ENCODE measurements at regions of chr13 and their contacts with region 1.

Region 1: DNA sequence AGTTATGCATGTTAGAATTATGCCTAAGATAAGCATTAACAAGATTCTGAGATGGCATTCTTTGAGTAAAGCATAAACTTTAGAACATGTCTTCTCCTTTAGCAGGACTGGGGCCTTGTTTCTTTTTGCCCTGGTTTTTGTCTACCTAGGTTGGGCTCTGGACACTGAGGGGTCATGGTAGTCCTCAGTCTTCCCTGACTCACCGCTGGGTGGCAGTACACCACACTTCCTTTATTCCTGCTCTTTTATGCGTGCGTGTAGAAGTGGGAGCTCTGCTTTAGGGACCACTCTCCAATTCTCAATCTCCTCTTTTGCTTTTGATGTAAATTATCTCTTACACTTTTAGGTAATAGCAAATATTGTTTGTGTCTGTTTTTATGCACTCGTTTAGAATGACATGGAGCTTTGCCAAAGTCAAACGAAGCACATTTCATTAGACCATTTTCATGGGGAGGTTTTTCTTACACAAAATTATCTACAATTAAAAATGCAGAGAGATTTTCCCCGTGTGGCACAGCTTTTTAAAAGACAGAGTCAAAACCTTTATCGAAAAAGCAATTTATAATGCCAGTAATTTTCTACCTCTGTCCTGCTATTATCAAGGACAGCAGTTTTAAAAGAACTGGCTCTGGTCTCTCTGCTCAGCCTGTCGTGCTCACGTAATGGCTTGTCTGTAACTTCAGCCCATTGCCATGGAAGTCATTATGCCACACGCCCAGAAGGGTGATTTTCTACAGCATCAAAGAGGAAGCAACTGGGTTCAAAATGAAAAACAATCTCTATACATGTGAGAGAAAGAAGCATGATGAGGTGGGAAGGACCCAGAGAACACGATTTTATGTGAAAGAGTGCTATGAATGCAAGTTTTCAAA is 413.9 kb downstream of the COG6 start:
- DNase-seq: peak; percentile 78 to 89 (median 83)
- H3K4me3 ChIP-seq: no peak overlapping the region
- H3K27ac ChIP-seq: peak overlapping the region in 1 of 2 donors; percentile 13
- H3K4me1 ChIP-seq: peaks cover 8% of the 10 kb centered on the region
- H3K27me3 ChIP-seq: no peaks in the 10 kb centered on the region
- CTCF ChIP-seq: peak; percentile 42 to 91 (median 76)
- EP300 ChIP-seq: no peak
- POLR2A ChIP-seq: peak; percentile 11

Region 2: DNA sequence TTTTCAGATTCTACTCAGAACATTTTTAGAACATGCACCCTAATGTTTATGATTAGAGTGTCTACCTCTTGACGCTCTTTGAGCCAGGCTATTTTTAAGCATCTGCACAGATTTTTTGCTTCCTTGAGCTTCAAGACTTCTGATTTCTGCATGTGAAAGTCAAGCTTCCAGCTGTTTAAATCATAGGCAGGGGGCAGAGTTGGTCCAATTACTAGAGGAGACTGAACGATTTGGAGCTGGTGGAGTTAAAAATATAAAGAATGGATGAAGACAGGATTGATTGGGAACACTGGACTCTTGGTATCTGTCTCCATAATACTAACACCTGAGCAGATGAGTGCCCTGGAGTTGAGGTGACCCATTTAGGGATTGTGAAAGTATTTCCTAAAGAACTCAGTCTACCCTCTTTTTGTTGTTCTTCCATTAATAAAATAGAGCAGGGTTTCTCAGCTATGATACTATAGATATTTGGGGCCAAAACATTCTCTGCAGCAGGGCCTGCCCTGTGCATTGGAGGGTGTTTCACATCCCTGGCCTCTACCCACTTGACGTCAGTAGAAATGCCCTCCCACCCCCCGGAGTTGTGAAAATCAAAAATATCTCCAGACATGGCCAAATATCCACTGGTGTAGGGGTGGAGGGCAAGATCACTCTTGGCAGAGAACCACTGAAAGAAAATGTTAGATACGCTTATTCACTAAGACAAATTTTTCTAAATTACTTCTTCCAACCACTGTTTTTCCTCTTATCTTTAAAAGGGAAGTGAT is 253.9 kb before region 1 on chr13:
- intact Hi-C with region 1: loop called in 2 of 4 experiments (anchors 10 kb)
- DNase-seq: peak; percentile 42 to 60 (median 54)
- H3K4me3 ChIP-seq: no peak overlapping the region
- H3K27ac ChIP-seq: peak overlapping the region in 1 of 2 donors; percentile 80
- H3K4me1 ChIP-seq: peaks cover 15% of the 10 kb centered on the region
- H3K27me3 ChIP-seq: no peaks in the 10 kb centered on the region
- CTCF ChIP-seq: peak in 2 of 3 donors; percentile 18 to 31
- EP300 ChIP-seq: no peak
- POLR2A ChIP-seq: no peak

Region 3: DNA sequence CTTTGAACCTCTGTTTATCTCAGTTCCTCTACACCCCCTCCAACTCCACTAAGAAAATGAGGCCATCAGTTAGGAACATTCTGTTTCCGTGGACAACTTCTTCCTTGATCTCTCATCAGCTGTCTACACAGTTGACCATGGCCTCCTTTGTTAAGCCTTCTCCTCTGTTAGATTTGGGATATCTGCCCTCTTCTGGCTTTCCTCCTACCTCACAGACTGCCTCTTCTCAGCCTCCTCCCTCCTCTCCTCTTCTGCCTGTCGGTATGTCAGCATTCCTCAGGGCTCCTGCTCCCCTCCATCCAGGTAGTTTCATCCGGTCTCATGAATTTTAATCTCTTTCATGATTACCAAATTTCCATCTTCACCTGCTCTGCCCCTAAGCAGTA is 142.2 kb after region 1 on chr13:
- intact Hi-C with region 1: loop called in 1 of 4 experiments (anchors 10 kb)
- DNase-seq: no peak
- H3K4me3 ChIP-seq: no peak overlapping the region
- H3K27ac ChIP-seq: no peak overlapping the region
- H3K4me1 ChIP-seq: no peaks in the 10 kb centered on the region
- H3K27me3 ChIP-seq: no peaks in the 10 kb centered on the region
- CTCF ChIP-seq: no peak
- EP300 ChIP-seq: no peak
- POLR2A ChIP-seq: no peak

Region 4: DNA sequence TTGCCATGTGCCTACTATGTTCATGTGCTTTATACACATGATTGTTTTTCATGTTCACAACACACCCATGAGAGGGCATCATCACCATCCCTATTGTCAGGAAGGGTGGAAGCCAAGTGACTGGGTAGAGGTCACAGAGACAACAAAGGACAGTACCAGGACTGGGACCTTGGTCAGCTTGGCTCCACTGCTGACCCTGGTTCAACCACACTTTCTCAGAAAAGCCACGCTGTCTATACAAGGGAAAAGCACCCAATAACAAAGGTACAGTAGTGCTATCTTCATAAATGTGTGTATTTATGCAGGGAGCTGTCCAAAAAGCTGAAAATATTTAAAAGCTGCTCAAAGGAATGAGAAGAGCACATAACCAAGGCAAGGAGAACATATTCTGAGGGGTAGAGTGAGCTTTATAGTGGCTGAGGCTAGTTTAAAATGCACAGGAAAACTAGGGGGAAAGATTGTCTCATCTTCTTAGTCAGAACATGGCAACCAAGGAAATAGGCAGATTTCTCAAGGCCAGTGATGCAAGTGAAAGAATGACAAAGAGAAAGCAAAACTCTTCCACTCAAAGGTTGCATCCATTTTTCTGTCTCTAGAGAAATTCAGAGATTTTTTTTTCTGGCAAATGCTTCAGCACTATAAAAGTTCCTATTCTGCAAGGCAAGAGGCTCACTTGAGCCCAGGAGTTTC is 182.1 kb after region 1 on chr13:
- intact Hi-C with region 1: loop called in 1 of 4 experiments (anchors 10 kb)
- DNase-seq: no peak
- H3K4me3 ChIP-seq: no peak overlapping the region
- H3K27ac ChIP-seq: peak overlapping the region in 1 of 2 donors; percentile 19
- H3K4me1 ChIP-seq: peaks cover 12% of the 10 kb centered on the region
- H3K27me3 ChIP-seq: no peaks in the 10 kb centered on the region
- CTCF ChIP-seq: no peak
- EP300 ChIP-seq: no peak
- POLR2A ChIP-seq: no peak

Region 5: GRCh38 chr13:40682449-40683240 is 613.2 kb after region 1 on chr13:
- intact Hi-C with region 1: loop called in 2 of 4 experiments (anchors 5 kb)
- DNase-seq: no peak
- H3K4me3 ChIP-seq: no peak overlapping the region
- H3K27ac ChIP-seq: no peak overlapping the region
- H3K4me1 ChIP-seq: peaks cover 3% of the 10 kb centered on the region
- H3K27me3 ChIP-seq: no peaks in the 10 kb centered on the region
- CTCF ChIP-seq: peak; percentile 27 to 50 (median 46)
- EP300 ChIP-seq: no peak
- POLR2A ChIP-seq: no peak

Measured in ovary (tissue), 10 donors.